Transverse colon (tissue), 4 donors: ENCODE measurements at regions of chr6 and their contacts with region 1.

Region 1: GRCh38 chr6:81997091-81997926 is 244.8 kb upstream of the TENT5A start:
- DNase-seq: no peak
- H3K4me3 ChIP-seq: no peak overlapping the region
- H3K27ac ChIP-seq: peak overlapping the region in 1 of 4 donors; percentile 13
- H3K4me1 ChIP-seq: no peaks in the 10 kb centered on the region
- H3K27me3 ChIP-seq: no peaks in the 10 kb centered on the region
- CTCF ChIP-seq: no peak
- EP300 ChIP-seq: no peak
- POLR2A ChIP-seq: no peak

Region 2: GRCh38 chr6:82484754-82485656 is 487.7 kb after region 1 on chr6:
- in situ Hi-C with region 1: no loop called
- intact Hi-C with region 1: loop called (anchors 5 kb)
- DNase-seq: no peak
- H3K4me3 ChIP-seq: no peak overlapping the region
- H3K27ac ChIP-seq: no peak overlapping the region
- H3K4me1 ChIP-seq: no peaks in the 10 kb centered on the region
- H3K27me3 ChIP-seq: no peaks in the 10 kb centered on the region
- CTCF ChIP-seq: no peak
- EP300 ChIP-seq: no peak
- POLR2A ChIP-seq: no peak